Activated CD8-positive, alpha-beta T cell treated with anti-CD3 and anti-CD28 coated beads, Interleukin-2, amount 10 ng/mL, durations not matched to agents 7 days and 5 days (primary cell): ENCODE measurements at regions of chr12 and their contacts with region 1.

Region 1: GRCh38 chr12:56041552-56042429 is at the start of gene RPS26:
- DNase-seq: peak; percentile 97
- ATAC-seq: peak; percentile 91
- H3K4me3 Mint-ChIP-seq: peak within 1 kb of the TSS; percentile 96
- H3K27ac Mint-ChIP-seq: peak within 1 kb of the TSS; percentile 96
- H3K4me1 Mint-ChIP-seq: peaks cover 50% of the 10 kb centered on the region
- H3K27me3 Mint-ChIP-seq: no peaks in the 10 kb centered on the region
- total RNA-seq, gene RPS26: 25.2 to 27.2 TPM

Region 2: DNA sequence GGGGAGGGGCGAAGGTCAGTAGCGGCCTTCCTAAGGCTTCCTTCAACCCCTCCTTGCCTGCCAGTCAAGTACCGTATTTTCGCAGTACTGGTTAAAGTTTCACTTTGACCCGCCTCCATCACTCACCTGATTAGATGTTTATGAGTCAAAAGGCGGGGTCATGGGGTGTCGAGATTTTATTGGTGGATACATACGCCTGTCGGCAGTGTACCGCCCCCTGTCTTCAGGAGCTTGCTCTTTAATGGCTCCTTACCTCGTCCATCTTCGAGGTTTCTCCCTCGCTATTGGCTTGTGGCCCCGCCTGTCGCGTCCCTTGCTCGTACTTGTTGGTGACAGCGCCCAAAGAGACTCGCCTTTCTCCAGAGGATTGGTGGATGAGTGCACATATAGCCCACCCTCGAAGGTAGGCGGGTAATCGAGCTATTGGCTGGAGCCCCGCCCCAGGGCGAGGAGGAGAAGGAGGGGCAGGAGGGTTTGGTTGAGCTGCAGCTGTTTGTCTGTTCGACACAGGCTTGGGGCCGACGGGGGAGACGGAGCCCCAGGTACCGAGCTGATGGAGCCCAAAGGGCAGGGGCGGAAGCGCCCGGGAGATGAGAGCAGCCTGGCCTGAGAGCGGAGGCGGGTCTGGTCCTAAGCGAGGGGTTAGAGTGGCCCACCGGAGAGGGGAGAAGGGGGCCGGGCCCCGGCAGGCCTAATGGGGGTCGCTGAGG is 68.0 kb before region 1 on chr12 and contains the start of gene RAB5B:
- CTCF ChIA-PET with region 1: interaction called, 21 read pairs
- POLR2A ChIA-PET with region 1: interaction called, 3 read pairs
- DNase-seq: peak; percentile 100
- ATAC-seq: peak; percentile 96
- H3K4me3 Mint-ChIP-seq: no peak within 1 kb of the TSS
- H3K27ac Mint-ChIP-seq: no peak within 1 kb of the TSS
- H3K4me1 Mint-ChIP-seq: peaks cover 17% of the 10 kb centered on the region
- H3K27me3 Mint-ChIP-seq: no peaks in the 10 kb centered on the region
- total RNA-seq, gene RAB5B: 51.9 to 52.9 TPM

Region 3: DNA sequence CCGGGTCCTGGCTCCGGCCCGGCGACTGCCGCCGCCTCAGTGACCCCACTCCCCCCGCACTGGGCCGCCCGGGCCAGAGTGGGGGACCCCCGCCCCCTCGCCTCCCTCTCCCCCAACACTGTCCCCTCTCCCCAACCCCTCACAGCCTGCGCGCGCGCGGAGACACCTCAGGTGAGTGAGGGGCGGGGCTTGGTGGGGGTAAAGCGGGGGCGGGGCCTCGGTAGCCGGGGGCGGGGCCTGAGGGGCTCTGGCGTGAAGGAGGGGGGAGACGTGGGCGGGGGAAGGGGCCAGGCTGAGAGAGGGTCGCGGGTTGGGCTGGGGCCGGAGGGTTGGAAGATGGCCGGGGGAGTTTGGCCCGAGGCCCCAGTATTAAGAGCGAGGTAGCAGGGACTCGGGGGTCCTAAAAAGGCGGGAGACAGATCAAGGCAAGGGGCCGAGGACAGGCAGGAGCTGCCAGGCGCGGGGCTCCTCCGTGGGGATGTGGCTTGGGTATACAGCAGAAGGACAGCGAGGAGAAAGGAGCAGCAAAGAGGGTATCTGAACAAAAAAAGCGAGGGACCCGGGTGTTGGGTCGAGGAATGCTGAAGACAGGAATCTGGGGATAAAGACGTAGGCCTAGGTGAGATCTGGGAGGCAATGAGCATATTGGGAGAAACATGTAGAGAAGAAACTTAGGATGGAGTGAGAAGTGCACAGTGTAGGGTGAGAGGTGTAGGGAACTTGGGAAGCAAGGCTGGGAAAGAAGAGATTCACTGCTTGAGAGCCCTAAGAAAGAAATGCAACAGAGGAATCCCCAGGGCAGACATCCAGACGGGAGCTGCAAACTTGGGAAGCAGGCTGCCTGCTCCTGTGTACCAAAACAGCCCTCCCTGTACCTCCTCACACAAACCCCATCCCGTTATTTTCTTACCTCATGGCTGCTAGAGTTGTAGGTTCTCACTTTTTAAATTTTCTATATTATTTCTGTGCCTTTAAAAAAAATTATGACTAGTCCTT is 33.9 kb before region 1 on chr12:
- CTCF ChIA-PET with region 1: interaction called, 22 read pairs
- POLR2A ChIA-PET with region 1: interaction called, 4 read pairs
- DNase-seq: peak; percentile 71
- ATAC-seq: peak; percentile 87
- H3K4me3 Mint-ChIP-seq: peak overlapping the region; percentile 82
- H3K27ac Mint-ChIP-seq: peak overlapping the region; percentile 86
- H3K4me1 Mint-ChIP-seq: peaks cover 29% of the 10 kb centered on the region
- H3K27me3 Mint-ChIP-seq: no peaks in the 10 kb centered on the region

Region 4: GRCh38 chr12:56029666-56030293 is 12.0 kb before region 1 on chr12:
- CTCF ChIA-PET with region 1: interaction called, 38 read pairs
- POLR2A ChIA-PET with region 1: interaction called, 3 read pairs
- DNase-seq: peak; percentile 64
- ATAC-seq: peak; percentile 64
- H3K4me3 Mint-ChIP-seq: no peak overlapping the region
- H3K27ac Mint-ChIP-seq: peak overlapping the region; percentile 8
- H3K4me1 Mint-ChIP-seq: peaks cover 54% of the 10 kb centered on the region
- H3K27me3 Mint-ChIP-seq: no peaks in the 10 kb centered on the region

Region 5: GRCh38 chr12:56078990-56079664 is 37.3 kb after region 1 on chr12:
- CTCF ChIA-PET with region 1: interaction called, 11 read pairs
- POLR2A ChIA-PET with region 1: no interaction called
- DNase-seq: peak; percentile 64
- ATAC-seq: peak; percentile 66
- H3K4me3 Mint-ChIP-seq: peak overlapping the region; percentile 79
- H3K27ac Mint-ChIP-seq: peak overlapping the region; percentile 43
- H3K4me1 Mint-ChIP-seq: peaks cover 21% of the 10 kb centered on the region
- H3K27me3 Mint-ChIP-seq: peaks cover 23% of the 10 kb centered on the region

Region 6: DNA sequence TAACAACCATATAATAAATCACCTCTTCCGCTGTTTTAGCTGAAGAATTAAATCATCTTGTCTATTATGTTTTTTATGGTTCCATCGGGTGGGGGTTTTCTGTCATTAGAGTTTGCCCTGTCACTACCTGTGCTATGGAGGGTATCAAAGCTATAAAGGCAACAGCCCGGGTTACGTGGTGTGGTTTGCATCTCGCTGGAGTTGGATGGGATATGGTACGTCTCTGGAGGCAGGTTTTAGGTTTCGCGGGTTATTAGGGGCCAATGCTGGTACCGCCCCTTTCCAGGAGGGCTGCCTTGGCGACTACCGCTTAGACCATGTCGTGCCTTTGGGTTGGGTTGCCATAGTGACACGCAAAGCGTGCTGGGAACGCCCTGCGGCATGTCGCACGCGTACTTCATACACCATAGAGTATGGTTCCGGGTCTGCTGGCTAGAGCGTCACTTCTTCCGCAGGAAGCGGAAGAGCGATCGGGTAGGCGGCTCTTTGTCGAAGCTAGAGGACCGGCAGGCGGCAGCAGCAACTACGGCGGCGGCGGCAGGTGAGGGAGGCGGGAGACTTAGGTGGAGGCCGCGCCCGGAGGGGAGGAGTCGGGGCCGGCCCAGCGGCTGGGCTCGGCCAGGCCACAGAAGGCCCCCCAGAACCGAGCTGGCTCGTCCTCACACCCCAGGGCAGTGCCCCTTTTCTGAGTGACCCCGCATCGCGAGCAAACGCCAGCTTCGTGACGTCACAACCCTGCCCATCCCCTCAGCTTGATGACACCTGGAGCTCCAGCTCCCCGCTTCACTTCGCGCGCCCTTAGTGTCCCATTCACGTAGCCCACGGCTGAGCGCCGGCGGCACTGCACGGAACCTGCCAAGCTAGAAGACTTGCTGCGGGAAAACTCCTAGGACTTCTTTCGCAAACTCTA is 76.2 kb after region 1 on chr12 and contains the start of gene ZC3H10:
- CTCF ChIA-PET with region 1: interaction called, 88 read pairs
- POLR2A ChIA-PET with region 1: interaction called, 10 read pairs
- DNase-seq: peak; percentile 100
- ATAC-seq: peak; percentile 76
- H3K4me3 Mint-ChIP-seq: peak within 1 kb of the TSS; percentile 100
- H3K27ac Mint-ChIP-seq: peak within 1 kb of the TSS; percentile 100
- H3K4me1 Mint-ChIP-seq: peaks cover 39% of the 10 kb centered on the region
- H3K27me3 Mint-ChIP-seq: no peaks in the 10 kb centered on the region
- total RNA-seq, gene ZC3H10: 9.1 to 10.6 TPM

Region 7: DNA sequence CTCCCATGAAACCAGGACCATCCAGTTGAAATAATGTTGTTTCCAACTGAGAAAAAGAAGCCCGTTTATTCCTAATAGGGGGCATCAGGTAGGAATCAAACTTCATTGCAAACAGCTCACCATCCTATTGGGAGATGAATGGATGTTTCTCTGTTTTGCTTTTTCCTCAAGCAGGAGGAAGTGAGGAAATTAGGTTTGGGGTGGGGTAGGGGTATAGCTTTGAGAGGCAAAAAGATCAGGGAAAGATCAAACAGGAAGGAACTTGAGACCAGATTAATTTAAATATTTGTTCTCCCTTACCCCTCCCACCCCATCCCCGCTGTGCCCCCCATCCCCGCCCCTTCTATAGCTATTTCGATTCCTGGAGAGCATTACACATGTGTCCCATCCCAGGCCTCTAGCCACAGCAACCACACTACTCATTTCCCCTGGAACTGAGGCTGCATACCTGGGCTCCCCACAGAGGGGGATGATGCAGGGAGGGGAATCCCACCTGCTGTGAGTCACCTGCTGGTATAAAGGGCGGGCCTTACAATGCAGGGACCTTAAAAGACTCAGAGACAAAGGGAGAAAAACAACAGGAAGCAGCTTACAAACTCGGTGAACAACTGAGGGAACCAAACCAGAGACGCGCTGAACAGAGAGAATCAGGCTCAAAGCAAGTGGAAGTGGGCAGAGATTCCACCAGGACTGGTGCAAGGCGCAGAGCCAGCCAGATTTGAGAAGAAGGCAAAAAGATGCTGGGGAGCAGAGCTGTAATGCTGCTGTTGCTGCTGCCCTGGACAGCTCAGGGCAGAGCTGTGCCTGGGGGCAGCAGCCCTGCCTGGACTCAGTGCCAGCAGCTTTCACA is 296.7 kb after region 1 on chr12 and contains the start of gene IL23A:
- CTCF ChIA-PET with region 1: no interaction called
- POLR2A ChIA-PET with region 1: no interaction called
- DNase-seq: peak; percentile 78
- ATAC-seq: peak; percentile 54
- H3K4me3 Mint-ChIP-seq: peak within 1 kb of the TSS; percentile 75
- H3K27ac Mint-ChIP-seq: peak within 1 kb of the TSS; percentile 99
- H3K4me1 Mint-ChIP-seq: peaks cover 42% of the 10 kb centered on the region
- H3K27me3 Mint-ChIP-seq: no peaks in the 10 kb centered on the region
- total RNA-seq, gene IL23A: 3.5 to 3.7 TPM